Sigmoid colon (tissue), 7 donors: ENCODE measurements at regions of chr9 and their contacts with region 1.

Region 1: DNA sequence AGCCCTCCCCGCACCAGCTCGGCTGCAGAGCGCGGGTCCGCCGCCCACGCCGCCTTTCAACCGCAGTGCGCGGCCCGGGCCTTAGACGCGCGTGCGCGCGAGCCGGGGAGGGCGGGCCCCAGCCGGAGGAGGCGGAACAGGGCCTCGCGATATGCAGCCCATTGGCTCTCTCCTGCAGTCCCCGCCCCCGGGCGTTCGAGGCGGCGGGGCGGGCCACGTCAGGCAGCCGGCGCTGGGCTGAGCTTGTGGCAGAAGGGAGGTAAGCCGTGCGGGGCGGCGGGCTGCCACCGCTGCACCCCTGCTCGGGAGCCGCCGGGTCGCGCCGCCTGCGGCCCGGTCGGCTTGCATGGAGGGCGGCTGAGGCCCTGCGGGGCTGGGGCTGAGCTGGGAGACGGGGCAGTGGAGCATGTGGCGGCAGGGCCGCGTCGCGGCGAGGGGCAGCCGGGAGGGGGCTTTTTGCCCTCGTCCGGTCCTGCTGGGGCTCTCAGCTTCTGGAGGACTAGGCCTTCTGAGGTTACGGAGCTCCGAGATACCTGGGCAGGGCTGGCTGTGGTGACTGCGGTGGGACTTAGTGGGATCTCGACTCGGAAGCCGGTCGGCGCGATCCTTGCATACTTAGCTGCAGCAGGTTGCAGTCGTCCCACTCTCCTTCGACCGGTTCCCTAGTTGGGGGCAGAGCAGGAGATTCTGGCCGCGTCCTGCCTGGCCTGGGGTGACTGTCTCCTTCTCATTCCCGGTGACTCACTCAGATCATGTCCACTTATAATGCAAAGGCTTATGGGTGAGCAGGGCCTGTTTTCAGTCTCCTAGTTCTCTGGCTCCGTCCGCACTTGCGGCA is at the start of gene FOCAD:
- DNase-seq: peak; percentile 97
- H3K4me3 ChIP-seq: peak within 1 kb of the TSS; percentile 56 to 85 (median 81)
- H3K27ac ChIP-seq: peak within 1 kb of the TSS; percentile 88 to 95 (median 92)
- H3K4me1 ChIP-seq: peaks cover 0 to 24% (median 15%) of the 10 kb centered on the region in 4 donors
- H3K27me3 ChIP-seq: no peaks in the 10 kb centered on the region
- CTCF ChIP-seq: no peak
- EP300 ChIP-seq: no peak
- POLR2A ChIP-seq: peak; percentile 43
- total RNA-seq, gene FOCAD: 25.5 to 51.5 (median 34.0) TPM

Region 2: DNA sequence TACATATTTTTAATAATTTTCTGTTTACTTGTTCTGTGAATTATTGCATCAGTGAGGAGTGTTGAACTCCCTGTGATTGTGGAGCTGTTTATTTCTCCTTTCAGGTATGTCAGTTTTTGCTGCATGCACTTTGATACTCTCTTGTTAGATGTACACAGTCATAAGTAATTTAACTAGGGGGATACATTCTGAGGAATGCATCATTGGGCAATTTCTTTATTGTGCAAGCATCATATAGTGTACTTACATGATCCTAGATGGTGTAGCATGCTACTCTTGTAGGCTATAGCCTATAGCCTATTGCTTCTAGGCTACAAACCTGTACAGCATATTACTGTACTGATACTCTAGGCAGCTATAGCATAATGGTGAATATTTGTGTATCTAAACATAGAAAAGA is 1444.3 kb before region 1 on chr9:
- intact Hi-C with region 1: no loop called
- DNase-seq: no peak
- H3K4me3 ChIP-seq: no peak overlapping the region
- H3K27ac ChIP-seq: no peak overlapping the region
- H3K4me1 ChIP-seq: peaks cover 0 to 22% (median 6%) of the 10 kb centered on the region in 4 donors
- H3K27me3 ChIP-seq: no peaks in the 10 kb centered on the region
- CTCF ChIP-seq: no peak
- EP300 ChIP-seq: no peak
- POLR2A ChIP-seq: no peak

Region 3: DNA sequence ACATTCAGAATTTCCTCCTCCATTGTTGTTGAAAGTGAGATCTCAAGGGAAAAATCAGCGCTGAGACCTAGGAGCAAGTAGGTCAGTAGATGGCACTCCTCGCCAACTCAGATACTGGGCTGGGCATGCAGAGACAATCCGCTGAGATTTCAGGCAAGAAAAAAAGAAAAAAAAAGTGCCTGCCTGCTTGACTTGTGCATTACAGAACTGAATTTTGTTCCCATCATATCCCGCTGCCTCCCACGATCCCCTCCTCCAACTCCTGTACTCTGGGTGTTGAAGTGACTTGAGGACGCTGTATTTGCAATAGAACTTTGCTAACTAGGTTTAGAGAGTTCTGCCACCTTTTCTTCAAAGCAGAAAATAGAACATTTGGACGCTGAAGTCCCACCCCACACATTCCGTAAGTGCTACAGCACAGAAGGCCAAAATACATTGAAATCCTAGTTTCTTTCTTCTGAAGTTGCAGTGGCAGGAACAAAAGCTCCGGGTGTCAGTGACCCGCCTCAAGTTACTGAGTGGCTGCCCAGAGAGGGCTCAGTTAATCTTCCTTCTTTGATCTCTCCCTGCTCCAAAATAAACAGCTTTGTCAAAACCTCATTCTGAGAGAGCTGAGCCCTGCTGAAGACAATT is 327.7 kb before region 1 on chr9:
- intact Hi-C with region 1: loop called (anchors 5 kb)
- DNase-seq: peak; percentile 81
- H3K4me3 ChIP-seq: peak overlapping the region in 3 of 4 donors; percentile 19 to 24 (median 24)
- H3K27ac ChIP-seq: peak overlapping the region; percentile 49 to 76 (median 60)
- H3K4me1 ChIP-seq: peaks cover 0 to 45% (median 28%) of the 10 kb centered on the region in 4 donors
- H3K27me3 ChIP-seq: no peaks in the 10 kb centered on the region
- CTCF ChIP-seq: peak; percentile 26 to 69 (median 40)
- EP300 ChIP-seq: no peak
- POLR2A ChIP-seq: no peak

Region 4: DNA sequence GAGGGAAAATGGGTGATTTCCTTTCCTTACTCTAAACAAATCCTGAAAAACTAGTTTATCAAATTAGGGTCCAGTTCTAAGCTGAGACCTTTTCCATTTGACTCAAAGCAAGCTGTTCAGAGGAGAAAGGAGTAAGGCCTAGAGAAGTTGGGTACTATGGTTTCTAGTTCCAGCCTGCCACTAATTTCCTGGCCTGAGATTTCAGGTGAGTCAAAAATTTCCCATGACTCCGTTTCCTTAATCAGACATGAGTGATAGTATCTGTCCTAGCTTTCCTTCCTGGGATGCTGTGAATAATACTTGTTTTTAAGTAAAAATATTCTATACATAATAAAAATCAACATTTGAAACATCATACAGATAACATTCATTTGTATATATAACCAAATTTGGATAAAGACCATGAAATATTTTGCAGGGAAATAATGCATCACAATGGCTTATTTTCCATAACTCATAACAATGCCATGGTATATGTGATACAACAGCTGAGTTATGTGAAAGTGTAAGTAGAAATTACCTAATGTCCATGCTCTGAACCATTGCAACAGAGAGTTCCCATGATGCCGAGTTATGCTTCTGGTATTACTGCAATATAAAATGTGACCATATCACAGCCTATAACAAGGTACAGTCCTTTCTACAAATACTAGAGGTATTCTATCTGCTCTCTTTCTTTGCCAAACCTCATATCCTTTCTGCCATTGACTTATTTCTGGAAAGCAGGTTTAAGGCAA is 204.7 kb before region 1 on chr9:
- intact Hi-C with region 1: loop called (anchors 10 kb)
- DNase-seq: no peak
- H3K4me3 ChIP-seq: no peak overlapping the region
- H3K27ac ChIP-seq: no peak overlapping the region
- H3K4me1 ChIP-seq: peaks cover 0 to 35% (median 28%) of the 10 kb centered on the region in 4 donors
- H3K27me3 ChIP-seq: no peaks in the 10 kb centered on the region
- CTCF ChIP-seq: no peak
- EP300 ChIP-seq: no peak
- POLR2A ChIP-seq: no peak

Region 5: DNA sequence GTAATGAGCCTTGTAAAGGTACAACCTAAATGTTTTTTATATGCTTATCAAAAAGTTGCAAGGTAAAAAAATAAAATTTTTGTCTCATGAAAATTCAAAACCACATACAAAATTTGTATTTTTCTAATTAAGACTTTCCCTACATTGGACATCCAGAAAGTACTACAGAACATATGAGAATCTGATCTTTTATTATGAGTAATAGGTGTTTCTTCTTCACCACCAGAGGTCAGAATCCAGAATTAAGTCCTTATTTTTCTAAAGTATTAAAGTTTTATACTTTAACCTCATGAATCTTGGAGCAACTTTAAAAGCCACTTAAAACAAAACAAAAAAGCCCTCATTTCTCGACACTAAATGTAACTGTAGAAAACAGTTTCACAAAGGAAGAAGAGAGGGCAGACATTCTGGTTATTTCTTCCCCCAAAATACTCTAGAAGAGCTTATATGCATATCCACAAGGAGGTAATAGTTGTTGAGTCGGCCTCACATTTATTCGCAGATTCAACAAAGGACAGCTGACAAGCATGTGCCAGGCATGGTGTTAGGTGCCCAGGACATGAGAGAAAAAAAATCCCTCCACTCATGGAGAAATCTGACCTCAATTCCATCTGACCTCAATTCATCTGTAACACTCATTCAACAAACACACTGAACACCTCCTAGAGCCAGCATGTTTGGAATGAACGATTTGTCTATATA is 131.2 kb before region 1 on chr9:
- intact Hi-C with region 1: loop called (anchors 5 kb)
- DNase-seq: no peak
- H3K4me3 ChIP-seq: no peak overlapping the region
- H3K27ac ChIP-seq: peak overlapping the region in 1 of 4 donors; percentile 19
- H3K4me1 ChIP-seq: peaks cover 0 to 61% (median 47%) of the 10 kb centered on the region in 4 donors
- H3K27me3 ChIP-seq: no peaks in the 10 kb centered on the region
- CTCF ChIP-seq: peak in 1 of 4 experiments; percentile 10
- EP300 ChIP-seq: no peak
- POLR2A ChIP-seq: no peak

Region 6: DNA sequence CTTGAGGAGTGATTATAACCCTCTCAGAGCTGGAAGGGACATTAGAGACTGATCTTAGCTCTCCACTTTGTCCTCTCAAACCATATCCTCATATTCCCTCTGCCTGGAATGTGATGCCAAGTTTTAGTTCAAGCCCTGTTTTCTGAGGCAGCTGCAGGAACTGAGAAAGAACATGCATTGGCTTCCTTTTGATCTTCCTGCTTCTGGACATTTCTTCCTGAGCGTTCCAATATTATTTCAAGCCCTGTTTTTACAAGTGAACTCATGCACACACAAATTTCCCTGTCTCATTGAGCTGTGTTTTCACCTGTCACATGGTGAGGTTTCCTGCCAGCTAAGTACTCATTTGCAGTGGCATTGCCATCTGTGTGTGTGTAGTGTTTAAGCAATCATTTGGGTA is 16.8 kb after region 1 on chr9:
- intact Hi-C with region 1: loop called (anchors 2 kb)
- DNase-seq: no peak
- H3K4me3 ChIP-seq: no peak overlapping the region
- H3K27ac ChIP-seq: peak overlapping the region in 3 of 4 donors; percentile 62 to 73 (median 70)
- H3K4me1 ChIP-seq: peaks cover 0 to 27% (median 15%) of the 10 kb centered on the region in 4 donors
- H3K27me3 ChIP-seq: no peaks in the 10 kb centered on the region
- CTCF ChIP-seq: no peak
- EP300 ChIP-seq: peak in 3 of 4 donors; percentile 19 to 68 (median 68)
- POLR2A ChIP-seq: no peak

Region 7: DNA sequence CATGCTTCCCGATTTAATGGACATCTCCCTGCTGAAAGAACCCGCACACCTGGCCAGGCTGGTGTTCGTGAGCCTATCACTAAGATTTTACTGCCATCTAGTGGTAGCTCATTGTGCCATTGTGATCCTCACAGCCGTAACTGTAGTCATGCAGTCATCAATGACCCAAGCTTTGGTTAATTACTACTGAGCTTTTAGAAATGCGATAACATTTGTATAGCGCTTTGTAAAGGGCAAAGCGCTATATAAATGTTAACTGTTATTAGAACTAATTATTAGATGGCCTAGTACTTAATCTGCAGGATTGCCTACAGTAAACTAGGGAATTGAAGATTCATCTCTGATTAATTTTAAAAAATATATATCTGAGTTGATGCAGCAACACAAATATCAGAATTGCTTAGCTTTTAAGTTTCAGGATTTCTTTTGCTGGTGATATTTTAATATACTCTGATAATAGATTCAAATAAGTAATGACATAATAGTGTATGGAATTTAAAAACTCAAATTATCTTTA is 257.0 kb after region 1 on chr9:
- intact Hi-C with region 1: loop called (anchors 5 kb)
- DNase-seq: peak; percentile 76
- H3K4me3 ChIP-seq: no peak overlapping the region
- H3K27ac ChIP-seq: no peak overlapping the region
- H3K4me1 ChIP-seq: peaks cover 0 to 11% (median 1%) of the 10 kb centered on the region in 4 donors
- H3K27me3 ChIP-seq: no peaks in the 10 kb centered on the region
- CTCF ChIP-seq: peak; percentile 67 to 82 (median 75)
- EP300 ChIP-seq: no peak
- POLR2A ChIP-seq: no peak

Region 8: DNA sequence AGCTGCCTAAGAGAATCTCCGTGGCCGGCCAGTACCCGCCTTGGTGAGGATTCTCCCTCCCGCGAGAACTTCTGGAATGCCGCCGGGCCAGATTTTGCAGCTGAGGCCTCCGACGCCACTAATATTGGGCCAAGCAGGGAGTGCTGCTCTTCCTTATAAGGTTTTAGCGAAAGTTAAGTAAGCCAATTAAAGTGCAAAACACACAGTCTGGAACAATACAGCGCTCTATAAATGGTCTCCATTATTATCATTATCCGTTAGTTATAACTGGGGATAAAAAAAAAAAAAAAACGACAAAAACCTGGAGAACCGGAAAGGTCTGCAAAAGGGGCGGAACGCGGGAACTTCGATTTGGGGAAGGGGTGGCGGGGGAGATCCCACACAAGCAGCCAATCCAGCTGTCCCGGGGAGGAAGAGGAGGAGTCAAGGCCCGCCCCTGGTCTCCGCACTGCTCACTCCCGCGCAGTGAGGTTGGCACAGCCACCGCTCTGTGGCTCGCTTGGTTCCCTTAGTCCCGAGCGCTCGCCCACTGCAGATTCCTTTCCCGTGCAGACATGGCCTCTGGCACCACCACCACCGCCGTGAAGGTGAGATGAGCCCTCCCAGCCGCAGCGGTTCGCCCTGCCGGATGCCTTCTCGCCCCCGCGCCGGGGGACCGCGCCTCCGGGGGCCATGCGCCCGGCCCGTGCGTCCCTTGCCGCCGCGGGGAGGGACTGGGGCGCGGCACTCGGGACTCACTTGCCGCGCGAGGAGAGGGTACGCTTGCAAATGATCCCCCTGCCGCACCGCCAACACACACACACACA is 1118.1 kb after region 1 on chr9 and contains the start of gene MTAP:
- intact Hi-C with region 1: loop called (anchors 10 kb)
- DNase-seq: peak; percentile 97
- H3K4me3 ChIP-seq: peak within 1 kb of the TSS; percentile 58 to 88 (median 78)
- H3K27ac ChIP-seq: peak within 1 kb of the TSS; percentile 91 to 94 (median 93)
- H3K4me1 ChIP-seq: peaks cover 0 to 48% (median 33%) of the 10 kb centered on the region in 4 donors
- H3K27me3 ChIP-seq: no peaks in the 10 kb centered on the region
- CTCF ChIP-seq: no peak
- EP300 ChIP-seq: peak in 1 of 4 donors; percentile 46
- POLR2A ChIP-seq: peak; percentile 74 to 81
- total RNA-seq, gene MTAP: 19.9 to 28.5 (median 23.7) TPM